ENCODE measurements at regions of chr9 and their contacts with region 1.

Region 1: GRCh38 chr9:93217706-93218105 is 33.8 kb downstream of the WNK2 start:
- DNase-seq: peak; percentile 59 to 87 (median 84)
- ATAC-seq: peak; percentile 84 to 94 (median 88)
- H3K4me3 ChIP-seq: no peak overlapping the region
- H3K27ac ChIP-seq: peak overlapping the region; percentile 36 to 78 (median 64)
- H3K4me1 ChIP-seq: peaks cover 18 to 31% (median 27%) of the 10 kb centered on the region in 3 donors
- H3K27me3 ChIP-seq: no peaks in the 10 kb centered on the region
- CTCF ChIP-seq: no peak

Region 2: DNA sequence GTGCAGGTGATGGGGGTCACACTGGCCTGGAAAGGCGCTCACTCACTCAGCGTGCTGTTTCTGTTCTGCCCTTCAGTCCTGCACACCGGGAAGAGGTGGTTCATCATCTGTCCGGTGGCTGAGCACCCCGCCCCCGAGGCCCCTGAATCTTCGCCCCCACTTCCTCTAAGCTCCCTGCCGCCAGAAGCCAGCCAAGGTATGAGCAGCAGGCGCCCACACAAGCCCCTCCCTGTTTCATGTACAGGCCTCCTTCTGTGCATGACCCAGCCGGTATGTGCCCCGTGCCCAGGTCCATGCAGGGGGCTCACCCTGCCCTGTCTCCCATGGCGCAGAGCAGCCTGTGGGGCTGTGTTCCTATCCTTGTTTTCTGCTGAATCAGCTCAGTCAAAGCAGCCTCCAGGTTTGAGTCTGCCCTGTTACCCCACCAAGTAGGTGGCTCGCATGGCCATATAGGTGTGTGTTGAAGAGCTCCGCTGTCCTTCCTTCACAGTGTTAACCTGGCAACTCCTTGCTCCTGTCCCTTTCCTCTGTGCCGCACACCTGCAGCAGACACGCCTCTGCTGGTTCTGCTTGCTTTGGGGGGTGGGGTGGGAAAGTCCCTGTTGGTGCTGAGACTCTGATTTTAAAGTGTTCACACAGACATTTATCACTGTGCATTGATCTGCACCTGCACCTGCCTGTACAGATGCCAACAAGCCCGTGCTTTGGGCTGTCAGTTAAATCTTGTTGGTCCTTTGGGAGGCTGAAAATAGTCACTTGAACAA is 51.0 kb after region 1 on chr9:
- intact Hi-C with region 1: loop called in 1 of 3 experiments (anchors 10 kb)
- DNase-seq: peak; percentile 68 to 92 (median 86)
- ATAC-seq: peak; percentile 93 to 96 (median 95)
- H3K4me3 ChIP-seq: no peak overlapping the region
- H3K27ac ChIP-seq: peak overlapping the region in 3 of 4 donors; percentile 39 to 72 (median 60)
- H3K4me1 ChIP-seq: peaks cover 0 to 23% (median 10%) of the 10 kb centered on the region in 3 donors
- H3K27me3 ChIP-seq: no peaks in the 10 kb centered on the region
- CTCF ChIP-seq: no peak